CD4-positive, alpha-beta memory T cell (primary cell): ENCODE measurements at regions of chr16 and their contacts with region 1.

Region 1: GRCh38 chr16:66315210-66315825 is 51.2 kb upstream of the CDH5 start:
- DNase-seq: peak; percentile 24 to 43 (median 36)
- H3K4me3 ChIP-seq: no peak overlapping the region
- H3K4me3 Mint-ChIP-seq: no peak overlapping the region
- H3K27ac ChIP-seq: no peak overlapping the region
- H3K27ac Mint-ChIP-seq: no peak overlapping the region
- H3K4me1 ChIP-seq: no peaks in the 10 kb centered on the region
- H3K4me1 Mint-ChIP-seq: peaks cover 0 to 2% (median 0%) of the 10 kb centered on the region in 4 donors
- H3K27me3 ChIP-seq: no peaks in the 10 kb centered on the region
- H3K27me3 Mint-ChIP-seq: peaks cover 10 to 19% of the 10 kb centered on the region in 2 donors

Region 2: DNA sequence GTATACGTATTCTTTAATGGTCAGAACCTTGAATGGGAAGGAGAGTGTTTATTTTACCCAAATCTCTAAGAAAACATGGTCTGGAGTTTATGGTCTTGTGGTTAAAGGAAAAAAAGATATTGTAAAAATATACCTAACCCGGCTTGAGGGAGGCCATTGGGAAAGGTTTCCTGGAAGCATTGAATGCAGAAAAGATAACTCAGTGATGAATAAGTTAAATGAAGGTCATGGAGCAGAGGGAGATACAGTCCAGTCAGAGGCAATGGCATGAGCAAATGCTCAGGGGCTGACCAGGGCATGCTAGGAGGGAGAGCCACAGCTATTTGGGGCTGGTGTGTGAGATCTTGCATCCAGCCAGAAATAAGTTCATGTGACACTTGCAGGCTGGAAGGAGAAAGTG is 379.2 kb before region 1 on chr16:
- CTCF ChIA-PET with region 1: no interaction called
- POLR2A ChIA-PET with region 1: no interaction called
- intact Hi-C with region 1: no loop called
- DNase-seq: no peak
- H3K4me3 ChIP-seq: no peak overlapping the region
- H3K4me3 Mint-ChIP-seq: no peak overlapping the region
- H3K27ac ChIP-seq: no peak overlapping the region
- H3K27ac Mint-ChIP-seq: no peak overlapping the region
- H3K4me1 ChIP-seq: no peaks in the 10 kb centered on the region
- H3K4me1 Mint-ChIP-seq: no peaks in the 10 kb centered on the region
- H3K27me3 ChIP-seq: no peaks in the 10 kb centered on the region
- H3K27me3 Mint-ChIP-seq: peaks cover 0 to 6% of the 10 kb centered on the region in 2 donors

Region 3: DNA sequence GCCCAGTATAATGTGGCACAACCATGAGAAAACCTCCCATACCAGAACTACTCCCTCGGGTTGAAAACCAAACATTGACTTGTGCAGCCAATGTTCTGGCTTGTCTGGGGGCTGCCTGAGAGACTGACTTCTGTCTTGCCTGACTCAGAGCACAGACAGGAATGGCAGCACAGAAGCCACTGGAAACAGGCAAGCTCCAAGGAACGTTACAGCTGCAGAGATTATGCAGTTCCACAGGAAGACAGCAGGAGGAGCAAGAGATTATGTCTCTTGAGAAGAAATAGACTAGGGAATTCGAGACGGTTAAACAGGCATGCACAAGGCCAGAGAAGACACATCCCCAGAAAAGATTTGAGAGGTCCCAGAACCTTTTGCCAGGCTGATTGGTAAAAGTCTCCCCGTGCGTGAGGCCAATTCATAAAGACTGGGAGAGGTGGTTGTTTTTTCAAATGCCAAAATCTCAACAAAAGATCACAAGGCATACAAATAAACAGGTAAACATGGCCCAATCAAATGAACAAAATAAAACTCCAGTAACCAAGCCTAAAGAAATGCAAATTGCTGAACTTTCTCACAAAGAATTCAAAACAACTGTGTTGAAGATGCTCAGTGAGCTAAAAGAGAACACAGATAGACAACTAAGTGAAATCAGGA is 39.4 kb before region 1 on chr16:
- CTCF ChIA-PET with region 1: interaction called, 4 read pairs
- POLR2A ChIA-PET with region 1: no interaction called
- intact Hi-C with region 1: loop called (anchors 1 kb)
- DNase-seq: peak in 1 of 5 donors; percentile 14
- H3K4me3 ChIP-seq: no peak overlapping the region
- H3K4me3 Mint-ChIP-seq: no peak overlapping the region
- H3K27ac ChIP-seq: no peak overlapping the region
- H3K27ac Mint-ChIP-seq: peak overlapping the region in 1 of 7 donors; percentile 73
- H3K4me1 ChIP-seq: peaks cover 8% of the 10 kb centered on the region
- H3K4me1 Mint-ChIP-seq: peaks cover 7 to 10% (median 8%) of the 10 kb centered on the region in 4 donors
- H3K27me3 ChIP-seq: peaks cover 4% of the 10 kb centered on the region
- H3K27me3 Mint-ChIP-seq: peaks cover 16 to 29% of the 10 kb centered on the region in 2 donors

Region 4: GRCh38 chr16:66562407-66562806 is 247.1 kb after region 1 on chr16:
- CTCF ChIA-PET with region 1: no interaction called
- POLR2A ChIA-PET with region 1: no interaction called
- intact Hi-C with region 1: no loop called
- DNase-seq: peak in 3 of 5 donors; percentile 28 to 42 (median 31)
- H3K4me3 ChIP-seq: no peak overlapping the region
- H3K4me3 Mint-ChIP-seq: peak overlapping the region in 6 of 8 donors; percentile 15 to 86 (median 64)
- H3K27ac ChIP-seq: no peak overlapping the region
- H3K27ac Mint-ChIP-seq: peak overlapping the region; percentile 58 to 80 (median 73)
- H3K4me1 ChIP-seq: peaks cover 73% of the 10 kb centered on the region
- H3K4me1 Mint-ChIP-seq: peaks cover 53 to 74% (median 63%) of the 10 kb centered on the region in 4 donors
- H3K27me3 ChIP-seq: no peaks in the 10 kb centered on the region
- H3K27me3 Mint-ChIP-seq: no peaks in the 10 kb centered on the region